Left colon (tissue), 2 donors: ENCODE measurements at regions of chr4 and their contacts with region 1.

Region 1: GRCh38 chr4:6873792-6874461 is 35.7 kb upstream of the TBC1D14 start:
- DNase-seq: peak; percentile 64 to 86
- ATAC-seq: peak; percentile 87

Region 2: GRCh38 chr4:6783053-6783981 is 90.6 kb before region 1 on chr4:
- intact Hi-C with region 1: loop called in 1 of 2 experiments (anchors 5 kb)
- DNase-seq: peak; percentile 86 to 92
- ATAC-seq: peak; percentile 79